IMR-90 (cell line): ENCODE measurements at regions of chr6 and their contacts with region 1.

Region 1: DNA sequence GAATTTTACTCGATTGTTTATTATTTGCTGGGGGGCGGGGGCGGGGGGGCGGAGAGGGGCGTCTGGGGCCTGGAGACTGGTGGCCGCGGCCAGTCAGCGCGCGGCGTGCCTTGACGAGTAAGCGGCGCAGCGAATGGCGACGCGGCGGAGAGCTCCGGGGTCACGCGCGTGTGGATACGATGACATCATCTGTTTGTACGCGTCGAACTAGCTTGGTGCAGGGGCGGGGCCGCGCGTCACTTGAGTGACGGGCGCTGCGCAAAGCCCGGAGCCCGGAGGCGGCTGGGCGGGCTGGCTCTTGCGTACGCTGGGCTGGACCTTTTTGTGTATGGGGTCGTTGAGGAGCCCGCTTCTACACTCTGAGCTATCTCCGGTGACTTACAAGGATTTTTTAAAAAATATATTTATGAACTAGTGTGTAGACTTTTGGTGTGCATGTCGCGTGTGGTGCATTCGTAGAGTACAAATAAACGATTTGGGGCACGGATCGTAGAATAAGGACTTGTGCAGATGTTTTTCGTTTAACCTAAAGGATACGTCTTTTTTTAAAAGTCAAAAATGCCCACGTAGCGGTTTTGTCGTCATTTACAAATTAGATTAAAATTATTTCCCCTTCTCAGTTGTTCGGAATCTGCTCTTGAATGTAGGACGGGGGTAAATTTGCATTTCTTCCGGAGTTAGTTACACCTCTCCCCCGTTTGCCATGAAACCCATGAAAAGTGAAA is 2.2 kb upstream of the FOXO3 start:
- DNase-seq: peak; percentile 99
- ATAC-seq: peak; percentile 55
- H3K4me3 ChIP-seq: peak overlapping the region; percentile 79
- H3K27ac ChIP-seq: peak overlapping the region; percentile 94
- H3K4me1 ChIP-seq: peaks cover 12% of the 10 kb centered on the region
- H3K27me3 ChIP-seq: no peaks in the 10 kb centered on the region
- CTCF ChIP-seq: no peak
- POLR2A ChIP-seq: no peak
- RAD21 ChIP-seq: peak; percentile 24; the same call in 1 of the 2 replicates

Region 2: DNA sequence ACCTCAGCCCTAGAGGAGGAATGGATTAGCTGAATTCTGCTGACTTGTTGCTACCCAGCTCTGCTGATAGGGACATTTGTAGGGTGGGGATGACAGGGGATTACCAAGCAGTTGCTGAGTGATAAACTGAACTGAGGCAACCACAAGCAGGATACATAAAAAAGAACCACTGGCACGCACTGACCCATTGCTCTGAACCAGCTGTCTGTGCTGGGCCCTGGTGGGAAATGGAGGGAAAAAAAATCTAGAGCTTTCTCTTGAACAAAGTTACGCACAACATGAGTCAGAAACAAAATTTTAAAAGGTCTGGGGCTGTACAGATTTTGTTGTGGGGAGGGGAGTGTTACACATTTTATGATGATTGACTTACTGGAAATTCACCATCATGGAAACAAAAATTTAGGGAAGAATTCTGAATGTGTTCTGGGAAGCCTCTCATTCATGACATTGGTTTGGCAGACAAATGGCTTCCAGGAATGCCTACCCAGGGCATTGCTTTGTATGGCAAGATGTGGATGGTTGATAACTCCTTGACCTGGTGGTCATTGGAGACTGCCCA is 39.9 kb after region 1 on chr6:
- CTCF ChIA-PET with region 1: no interaction called
- POLR2A ChIA-PET with region 1: no interaction called
- dilution Hi-C with region 1: no loop called
- in situ Hi-C with region 1: no loop called
- intact Hi-C with region 1: no loop called
- DNase-seq: peak; percentile 47
- ATAC-seq: peak; percentile 36
- H3K4me3 ChIP-seq: no peak overlapping the region
- H3K27ac ChIP-seq: no peak overlapping the region
- H3K4me1 ChIP-seq: peaks cover 20% of the 10 kb centered on the region
- H3K27me3 ChIP-seq: no peaks in the 10 kb centered on the region
- CTCF ChIP-seq: no peak
- POLR2A ChIP-seq: no peak
- RAD21 ChIP-seq: no peak

Region 3: DNA sequence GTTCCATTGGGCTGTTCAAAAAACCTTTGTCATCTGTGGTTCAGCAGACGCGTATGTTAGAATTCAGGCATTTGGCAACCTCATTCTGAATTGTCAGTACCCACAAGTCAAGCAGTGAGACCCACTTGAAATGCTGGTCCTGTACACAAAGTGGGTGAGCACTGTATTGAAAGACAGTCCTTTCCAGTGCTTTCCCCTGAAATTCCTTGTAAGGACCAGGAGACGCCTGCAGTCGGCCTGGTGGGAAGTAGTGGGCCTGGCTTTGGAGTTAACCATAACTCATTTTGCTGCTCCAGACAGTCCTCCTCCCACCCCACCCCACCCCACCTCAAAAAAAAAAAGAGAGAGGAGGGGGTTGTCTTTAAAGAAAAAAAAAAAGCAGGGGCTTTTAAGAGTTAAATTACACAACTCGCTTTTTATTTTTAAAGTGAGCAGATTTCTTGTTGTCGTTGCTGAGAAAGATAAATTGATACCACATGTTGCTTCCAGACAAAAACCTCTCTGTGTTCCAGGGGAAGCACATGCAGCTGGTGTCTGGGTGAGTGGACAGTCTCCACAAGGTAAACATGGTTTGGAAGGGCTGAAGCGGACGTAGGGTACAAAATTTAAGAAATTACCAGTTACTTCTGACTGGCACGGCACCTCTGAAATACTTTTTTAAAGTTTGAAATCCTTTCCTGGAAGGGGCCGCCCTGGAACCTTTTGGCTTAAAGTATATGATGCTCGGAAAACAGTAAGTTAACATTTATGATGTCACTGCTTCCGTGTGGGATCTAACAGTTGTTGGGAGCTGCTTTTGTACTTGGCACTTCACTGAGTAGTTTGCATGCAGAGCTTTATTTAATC is 97.5 kb after region 1 on chr6:
- CTCF ChIA-PET with region 1: no interaction called
- POLR2A ChIA-PET with region 1: interaction called, 3 read pairs
- dilution Hi-C with region 1: no loop called
- in situ Hi-C with region 1: no loop called
- intact Hi-C with region 1: loop called (anchors 2 kb)
- DNase-seq: peak; percentile 90
- ATAC-seq: peak; percentile 21
- H3K4me3 ChIP-seq: no peak overlapping the region
- H3K27ac ChIP-seq: peak overlapping the region; percentile 51; the same call in 1 of the 2 replicates
- H3K4me1 ChIP-seq: peaks cover 33% of the 10 kb centered on the region
- H3K27me3 ChIP-seq: no peaks in the 10 kb centered on the region
- CTCF ChIP-seq: no peak
- POLR2A ChIP-seq: no peak
- RAD21 ChIP-seq: no peak

Region 4: DNA sequence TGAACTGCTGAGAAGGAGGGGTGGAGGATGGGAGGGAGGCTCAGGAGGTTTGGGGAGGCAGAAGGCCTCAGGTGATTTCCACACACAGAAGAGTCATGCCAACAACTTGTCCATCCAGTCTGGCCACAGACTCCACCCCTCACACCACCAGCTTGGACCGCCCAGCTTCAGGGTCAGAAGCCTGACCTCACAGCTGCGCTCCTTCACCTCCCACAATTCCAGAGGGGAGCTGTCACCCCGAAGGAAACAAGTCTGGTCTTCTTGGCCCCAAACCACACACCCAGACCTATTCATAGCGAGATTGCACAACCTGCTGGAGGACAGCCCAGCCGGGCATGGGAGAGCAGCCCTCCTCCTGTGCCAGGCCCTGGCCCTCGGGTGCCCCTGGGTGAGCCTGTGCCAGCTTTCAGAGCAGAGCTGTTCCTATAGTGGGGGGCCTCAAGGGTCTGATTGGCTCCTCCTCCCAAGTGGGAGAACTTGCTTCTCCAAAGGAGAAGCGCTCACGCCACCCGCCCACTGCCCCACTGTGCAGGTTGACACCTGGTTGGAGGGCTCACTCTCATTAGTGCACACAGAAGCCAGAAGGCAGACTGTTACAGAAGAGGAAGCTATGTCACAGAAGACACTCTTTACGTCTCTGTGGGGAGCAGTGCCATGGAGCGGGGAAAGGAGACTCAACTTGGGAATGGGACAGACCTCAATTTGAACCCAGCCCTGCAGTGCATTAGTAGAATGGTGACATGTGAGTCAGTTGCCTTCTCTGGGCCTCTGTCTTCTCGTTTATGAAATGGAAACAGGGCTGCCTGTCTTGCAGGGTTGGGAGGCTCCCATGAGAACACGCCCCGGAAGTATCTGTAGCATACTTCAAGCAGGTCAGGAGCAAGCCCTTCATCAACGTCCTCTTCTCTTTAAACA is 131.0 kb after region 1 on chr6:
- CTCF ChIA-PET with region 1: no interaction called
- POLR2A ChIA-PET with region 1: no interaction called
- dilution Hi-C with region 1: no loop called
- in situ Hi-C with region 1: no loop called
- intact Hi-C with region 1: loop called (anchors 2 kb)
- DNase-seq: peak; percentile 94
- ATAC-seq: peak; percentile 92
- H3K4me3 ChIP-seq: no peak overlapping the region
- H3K27ac ChIP-seq: peak overlapping the region; percentile 6; the same call in 1 of the 2 replicates
- H3K4me1 ChIP-seq: peaks cover 31% of the 10 kb centered on the region
- H3K27me3 ChIP-seq: no peaks in the 10 kb centered on the region
- CTCF ChIP-seq: no peak
- POLR2A ChIP-seq: no peak
- RAD21 ChIP-seq: 0 out of 2 replicates have a peak, but pooled peaks have one; percentile 5

Region 5: DNA sequence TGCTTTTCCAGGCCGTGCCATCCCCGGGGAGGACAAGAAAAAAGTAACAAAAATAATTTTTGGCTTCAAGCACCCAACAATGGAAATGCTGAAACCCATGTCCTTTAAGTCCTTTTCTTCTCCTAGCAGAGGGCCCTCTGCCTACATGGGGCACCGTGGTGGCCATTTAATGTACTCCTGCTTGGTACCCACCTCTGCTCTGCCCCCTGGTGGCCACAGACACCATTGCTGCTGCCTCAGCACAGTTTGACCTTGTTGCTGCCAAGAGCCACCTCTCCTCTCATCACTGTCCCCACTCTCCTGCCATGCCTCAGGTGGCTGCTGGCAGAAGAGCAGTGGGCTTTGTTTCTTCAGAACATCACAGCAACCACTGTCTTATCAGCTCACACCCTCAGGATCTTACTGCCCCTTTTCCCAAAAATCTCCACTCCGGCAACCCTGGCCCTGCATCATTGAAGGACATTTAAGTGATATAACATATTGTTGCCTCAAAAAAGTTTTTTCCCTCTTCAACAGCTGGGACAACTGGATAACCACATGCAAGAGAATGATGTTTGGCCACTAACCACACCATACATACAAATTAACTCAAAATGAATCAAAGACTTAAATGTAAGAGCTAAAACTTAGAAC is 276.8 kb after region 1 on chr6:
- CTCF ChIA-PET with region 1: no interaction called
- POLR2A ChIA-PET with region 1: no interaction called
- dilution Hi-C with region 1: no loop called
- in situ Hi-C with region 1: no loop called
- intact Hi-C with region 1: loop called (anchors 1 kb)
- DNase-seq: peak; percentile 72
- ATAC-seq: peak; percentile 90
- H3K4me3 ChIP-seq: no peak overlapping the region
- H3K27ac ChIP-seq: no peak overlapping the region
- H3K4me1 ChIP-seq: peaks cover 6% of the 10 kb centered on the region; the same call in 1 of the 2 replicates
- H3K27me3 ChIP-seq: no peaks in the 10 kb centered on the region; the same call in 1 of the 2 replicates
- CTCF ChIP-seq: peak; percentile 76
- POLR2A ChIP-seq: no peak
- RAD21 ChIP-seq: peak; percentile 80

Region 6: GRCh38 chr6:109073344-109074132 is 515.0 kb after region 1 on chr6:
- CTCF ChIA-PET with region 1: interaction called, 4 read pairs
- POLR2A ChIA-PET with region 1: no interaction called
- dilution Hi-C with region 1: no loop called
- in situ Hi-C with region 1: no loop called
- intact Hi-C with region 1: loop called (anchors 5 kb)
- DNase-seq: peak; percentile 76
- ATAC-seq: peak; percentile 65
- H3K4me3 ChIP-seq: no peak overlapping the region
- H3K27ac ChIP-seq: no peak overlapping the region
- H3K4me1 ChIP-seq: peaks cover 2% of the 10 kb centered on the region; the same call in 1 of the 2 replicates
- H3K27me3 ChIP-seq: no peaks in the 10 kb centered on the region
- CTCF ChIP-seq: peak; percentile 75
- POLR2A ChIP-seq: no peak
- RAD21 ChIP-seq: peak; percentile 83

Region 7: GRCh38 chr6:109382576-109383437 is 824.3 kb after region 1 on chr6:
- CTCF ChIA-PET with region 1: no interaction called
- POLR2A ChIA-PET with region 1: no interaction called
- dilution Hi-C with region 1: no loop called
- in situ Hi-C with region 1: no loop called
- intact Hi-C with region 1: loop called (anchors 5 kb)
- DNase-seq: peak; percentile 92
- ATAC-seq: peak; percentile 81
- H3K4me3 ChIP-seq: peak overlapping the region; percentile 64
- H3K27ac ChIP-seq: peak overlapping the region; percentile 98
- H3K4me1 ChIP-seq: no peaks in the 10 kb centered on the region
- H3K27me3 ChIP-seq: peaks cover 6% of the 10 kb centered on the region
- CTCF ChIP-seq: peak; percentile 52
- POLR2A ChIP-seq: peak; percentile 47; the same call in 1 of the 2 replicates
- RAD21 ChIP-seq: peak; percentile 43